ENCODE measurements at regions of chr2 and their contacts with region 1.

Region 1: DNA sequence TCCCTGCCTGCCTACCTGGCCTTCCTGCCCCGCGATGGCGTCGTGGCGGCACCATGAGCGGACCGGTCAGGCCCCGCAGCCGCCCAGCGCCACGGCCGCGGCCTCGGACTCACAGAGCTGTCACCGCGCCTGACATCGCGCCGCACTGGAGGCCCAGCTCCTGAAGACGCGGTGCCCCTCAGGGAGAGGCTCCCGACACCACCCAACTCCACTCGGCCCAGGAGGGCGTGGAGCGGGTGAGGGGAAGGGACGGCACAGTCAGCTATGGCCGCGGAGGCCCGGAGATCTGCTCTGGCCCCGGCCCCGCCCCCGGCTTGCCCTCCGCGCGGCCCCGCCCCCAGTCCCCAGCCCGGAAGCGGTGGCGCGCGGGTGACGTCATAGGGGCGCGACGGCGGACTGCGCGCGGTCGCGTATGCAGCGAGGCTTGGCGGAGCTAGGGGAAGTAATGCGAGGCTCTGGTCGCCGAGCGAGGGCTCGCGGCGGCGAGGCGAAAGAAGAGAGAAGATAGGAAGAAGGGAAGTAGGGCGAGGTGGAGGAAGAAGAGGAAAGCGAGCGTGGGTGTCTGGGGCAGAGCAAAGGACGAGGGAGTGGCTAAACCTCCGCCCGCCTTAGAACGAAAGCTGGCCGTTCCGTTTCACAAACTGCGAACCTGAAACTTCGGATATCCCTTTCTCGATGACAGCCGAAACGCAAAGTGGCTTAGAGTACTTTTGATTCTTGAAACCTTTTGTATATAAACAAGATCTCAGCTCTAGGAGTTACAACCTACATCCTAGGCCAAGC is at the start of gene SLC35F5:
- DNase-seq: peak; percentile 82 to 87
- ATAC-seq: peak; percentile 91 to 92
- H3K4me3 ChIP-seq: peak within 1 kb of the TSS; percentile 83 to 90 (median 86)
- H3K27ac ChIP-seq: peak within 1 kb of the TSS; percentile 90 to 96 (median 93)
- H3K4me1 ChIP-seq: peaks cover 29 to 39% of the 10 kb centered on the region in 2 donors
- H3K27me3 ChIP-seq: no peaks in the 10 kb centered on the region
- CTCF ChIP-seq: no peak
- POLR2A ChIP-seq: peak; percentile 89
- total RNA-seq, gene SLC35F5: 31.4 to 62.6 (median 49.3) TPM

Region 2: DNA sequence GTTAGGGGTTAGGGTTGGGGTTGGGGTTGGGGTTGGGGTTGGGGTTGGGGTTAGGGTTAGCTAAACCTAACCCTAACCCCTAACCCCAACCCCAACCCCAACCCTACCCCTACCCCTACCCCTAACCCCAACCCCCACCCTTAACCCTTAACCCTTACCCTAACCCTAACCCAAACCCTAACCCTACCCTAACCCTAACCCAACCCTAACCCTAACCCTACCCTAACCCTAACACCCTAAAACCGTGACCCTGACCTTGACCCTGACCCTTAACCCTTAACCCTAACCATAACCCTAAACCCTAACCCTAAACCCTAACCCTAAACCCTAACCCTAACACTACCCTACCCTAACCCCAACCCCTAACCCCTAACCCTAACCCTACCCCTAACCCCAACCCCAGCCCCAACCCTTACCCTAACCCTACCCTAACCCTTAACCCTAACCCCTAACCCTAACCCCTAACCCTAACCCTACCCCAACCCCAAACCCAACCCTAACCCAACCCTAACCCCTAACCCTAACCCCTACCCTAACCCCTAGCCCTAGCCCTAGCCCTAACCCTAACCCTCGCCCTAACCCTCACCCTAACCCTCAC is 153.6 kb before region 1 on chr2:
- in situ Hi-C with region 1: no loop called
- intact Hi-C with region 1: loop called (anchors 5 kb)
- DNase-seq: no peak
- ATAC-seq: peak in 1 of 2 donors; percentile 80
- H3K4me3 ChIP-seq: peak overlapping the region; percentile 54 to 76 (median 62)
- H3K27ac ChIP-seq: peak overlapping the region; percentile 79 to 95 (median 90)
- H3K4me1 ChIP-seq: peaks cover 0 to 3% of the 10 kb centered on the region in 2 donors
- H3K27me3 ChIP-seq: no peaks in the 10 kb centered on the region
- CTCF ChIP-seq: no peak
- POLR2A ChIP-seq: no peak

Region 3: GRCh38 chr2:113818382-113818951 is 61.9 kb after region 1 on chr2:
- in situ Hi-C with region 1: no loop called
- intact Hi-C with region 1: loop called (anchors 1 kb)
- DNase-seq: peak; percentile 32 to 44
- ATAC-seq: peak; percentile 83 to 94
- H3K4me3 ChIP-seq: peak overlapping the region; percentile 10 to 28 (median 22)
- H3K27ac ChIP-seq: peak overlapping the region; percentile 64 to 78 (median 70)
- H3K4me1 ChIP-seq: peaks cover 7 to 11% of the 10 kb centered on the region in 2 donors
- H3K27me3 ChIP-seq: no peaks in the 10 kb centered on the region
- CTCF ChIP-seq: no peak
- POLR2A ChIP-seq: no peak

Region 4: GRCh38 chr2:113831161-113831560 is 74.6 kb after region 1 on chr2:
- in situ Hi-C with region 1: no loop called
- intact Hi-C with region 1: no loop called
- DNase-seq: no peak
- ATAC-seq: no peak
- H3K4me3 ChIP-seq: no peak overlapping the region
- H3K27ac ChIP-seq: no peak overlapping the region
- H3K4me1 ChIP-seq: no peaks in the 10 kb centered on the region
- H3K27me3 ChIP-seq: no peaks in the 10 kb centered on the region
- CTCF ChIP-seq: no peak
- POLR2A ChIP-seq: no peak

Region 5: DNA sequence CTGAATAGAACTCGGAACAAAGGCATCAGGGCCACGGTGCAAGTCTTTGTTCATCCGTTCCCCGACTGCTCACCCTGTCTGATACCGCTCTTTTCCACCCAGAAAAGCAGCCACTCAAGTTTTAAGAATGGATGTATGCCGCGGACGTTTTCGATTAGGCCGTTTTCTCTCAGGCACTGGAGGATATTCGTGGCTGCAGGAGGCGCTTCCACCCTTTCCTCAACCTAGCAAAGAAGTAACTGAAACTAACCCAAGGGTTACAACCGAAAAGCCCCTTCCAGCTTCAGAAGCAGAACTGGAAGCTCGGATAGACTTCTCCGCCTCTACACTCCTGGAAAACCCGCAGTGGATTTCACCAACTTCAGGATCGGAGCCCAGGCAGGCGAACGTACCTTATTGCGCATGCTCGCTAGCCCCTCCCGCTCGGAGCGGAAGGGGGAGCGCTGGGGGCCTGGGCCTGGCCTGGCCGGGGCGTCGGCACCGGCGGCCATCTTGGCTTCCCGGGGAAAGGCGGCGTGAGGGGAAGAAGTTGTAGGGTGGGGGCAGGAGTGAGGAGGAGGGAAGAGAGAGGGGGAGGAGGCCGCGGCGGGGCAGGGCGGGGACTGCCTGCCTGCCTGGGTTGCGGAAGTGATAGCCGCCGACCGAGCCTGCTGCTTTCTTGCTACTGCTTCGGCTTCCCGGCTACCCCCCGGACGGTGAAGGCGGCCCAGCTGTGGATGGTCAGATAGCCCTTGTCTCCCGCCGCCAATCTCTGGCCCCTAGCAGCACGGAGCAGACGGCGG is 133.1 kb after region 1 on chr2 and contains the start of gene ACTR3:
- in situ Hi-C with region 1: loop called (anchors 5 to 10 kb)
- intact Hi-C with region 1: loop called (anchors 1 kb)
- DNase-seq: peak; percentile 96 to 97
- ATAC-seq: peak; percentile 86 to 89
- H3K4me3 ChIP-seq: peak within 1 kb of the TSS; percentile 84 to 99 (median 94)
- H3K27ac ChIP-seq: peak within 1 kb of the TSS; percentile 93 to 99 (median 99)
- H3K4me1 ChIP-seq: peaks cover 39 to 57% of the 10 kb centered on the region in 2 donors
- H3K27me3 ChIP-seq: no peaks in the 10 kb centered on the region
- CTCF ChIP-seq: no peak
- POLR2A ChIP-seq: peak; percentile 58 to 75
- total RNA-seq, gene ACTR3: 39.3 to 75.0 (median 56.6) TPM

Measured in gastrocnemius medialis (tissue), 4 donors.